ENCODE measurements at regions of chr16 and their contacts with region 1.

Region 1: GRCh38 chr16:57422026-57422944 is 17.7 kb downstream of the CCL17 start:
- DNase-seq: peak; percentile 33
- H3K4me3 Mint-ChIP-seq: no peak overlapping the region
- H3K27ac Mint-ChIP-seq: no peak overlapping the region
- H3K4me1 Mint-ChIP-seq: peaks cover 11% of the 10 kb centered on the region
- H3K27me3 Mint-ChIP-seq: no peaks in the 10 kb centered on the region

Region 2: DNA sequence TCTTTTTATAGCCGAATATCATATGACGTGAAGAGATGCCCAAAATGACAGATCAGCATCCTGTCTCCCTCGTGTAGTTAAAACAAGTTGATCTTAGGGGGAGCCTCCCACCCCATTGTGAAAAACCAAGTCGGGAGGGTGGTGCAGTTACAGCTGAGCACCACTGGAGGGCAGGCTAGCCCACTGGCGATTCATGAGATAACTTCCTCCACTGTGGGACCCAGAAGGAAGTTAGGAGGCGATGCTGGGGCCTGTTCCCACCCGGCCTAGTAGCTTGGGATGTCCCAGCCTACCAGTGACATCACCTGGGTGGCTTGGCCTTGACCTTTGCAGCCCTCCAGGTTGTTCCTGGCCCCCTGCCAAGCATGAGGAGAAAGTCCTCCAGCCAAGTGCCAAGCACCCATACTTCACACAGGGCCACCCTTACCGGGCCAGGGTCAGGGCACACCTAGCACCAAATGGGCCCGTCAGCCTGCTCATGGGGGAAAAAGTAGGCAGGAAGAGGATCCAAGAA is 338.0 kb before region 1 on chr16:
- CTCF ChIA-PET with region 1: interaction called, 5 read pairs
- intact Hi-C with region 1: loop called (anchors 1 kb)
- DNase-seq: peak; percentile 86
- H3K4me3 Mint-ChIP-seq: no peak overlapping the region
- H3K27ac Mint-ChIP-seq: peak overlapping the region; percentile 73
- H3K4me1 Mint-ChIP-seq: peaks cover 9% of the 10 kb centered on the region
- H3K27me3 Mint-ChIP-seq: no peaks in the 10 kb centered on the region

Region 3: DNA sequence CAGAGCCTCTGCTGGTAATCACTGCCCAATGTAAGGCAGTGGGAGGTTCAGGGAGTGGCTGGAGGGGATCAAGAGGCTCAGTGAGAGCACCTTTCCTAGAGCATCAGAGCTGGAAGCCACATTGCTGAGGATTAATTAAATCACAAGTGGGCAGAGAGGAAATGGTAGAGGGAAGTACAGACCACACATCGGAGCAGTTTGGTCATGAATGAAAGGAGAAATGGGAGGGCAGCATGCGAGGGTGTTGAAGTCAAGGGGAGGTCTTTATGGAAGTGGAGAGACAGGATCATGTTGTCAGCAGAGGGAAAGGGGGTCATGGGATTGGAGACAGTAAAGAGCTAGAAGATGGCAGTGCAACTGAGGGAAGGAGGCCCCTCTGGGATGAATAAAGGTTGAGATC is 15.4 kb before region 1 on chr16:
- CTCF ChIA-PET with region 1: interaction called, 12 read pairs
- intact Hi-C with region 1: no loop called
- DNase-seq: no peak
- H3K4me3 Mint-ChIP-seq: no peak overlapping the region
- H3K27ac Mint-ChIP-seq: no peak overlapping the region
- H3K4me1 Mint-ChIP-seq: no peaks in the 10 kb centered on the region
- H3K27me3 Mint-ChIP-seq: no peaks in the 10 kb centered on the region

Region 4: GRCh38 chr16:57447186-57447962 is 25.1 kb after region 1 on chr16 and contains the starts of genes CIAPIN1 and COQ9:
- CTCF ChIA-PET with region 1: interaction called, 11 read pairs
- intact Hi-C with region 1: loop called (anchors 1 kb)
- DNase-seq: peak; percentile 96
- H3K4me3 Mint-ChIP-seq: peak within 1 kb of the TSS; percentile 86
- H3K27ac Mint-ChIP-seq: peak within 1 kb of the TSS; percentile 86
- H3K4me1 Mint-ChIP-seq: peaks cover 42% of the 10 kb centered on the region
- H3K27me3 Mint-ChIP-seq: no peaks in the 10 kb centered on the region
- total RNA-seq, gene CIAPIN1: 29.5 to 31.0 TPM
- total RNA-seq, gene COQ9: 30.6 TPM

Region 5: GRCh38 chr16:57519796-57520360 is 97.6 kb after region 1 on chr16:
- CTCF ChIA-PET with region 1: interaction called, 79 read pairs
- intact Hi-C with region 1: loop called (anchors 1 kb)
- DNase-seq: peak; percentile 87
- H3K4me3 Mint-ChIP-seq: no peak overlapping the region
- H3K27ac Mint-ChIP-seq: peak overlapping the region; percentile 73
- H3K4me1 Mint-ChIP-seq: peaks cover 4% of the 10 kb centered on the region
- H3K27me3 Mint-ChIP-seq: no peaks in the 10 kb centered on the region

Region 6: GRCh38 chr16:57559072-57559790 is 136.9 kb after region 1 on chr16:
- CTCF ChIA-PET with region 1: no interaction called
- intact Hi-C with region 1: no loop called
- DNase-seq: no peak
- H3K4me3 Mint-ChIP-seq: no peak overlapping the region
- H3K27ac Mint-ChIP-seq: no peak overlapping the region
- H3K4me1 Mint-ChIP-seq: peaks cover 18% of the 10 kb centered on the region
- H3K27me3 Mint-ChIP-seq: no peaks in the 10 kb centered on the region